ENCODE measurements at regions of chr4 and their contacts with region 1.

Region 1: GRCh38 chr4:73341454-73341853 is 62.6 kb upstream of the ALB start:
- DNase-seq: peak; percentile 72
- H3K4me3 Mint-ChIP-seq: no peak overlapping the region
- H3K27ac Mint-ChIP-seq: no peak overlapping the region
- H3K4me1 Mint-ChIP-seq: no peaks in the 10 kb centered on the region
- H3K27me3 Mint-ChIP-seq: no peaks in the 10 kb centered on the region
- CTCF ChIP-seq: peak; percentile 62

Region 2: GRCh38 chr4:73315091-73315490 is 26.4 kb before region 1 on chr4:
- CTCF ChIA-PET with region 1: interaction called, 30 read pairs
- POLR2A ChIA-PET with region 1: no interaction called
- intact Hi-C with region 1: no loop called
- DNase-seq: peak; percentile 3
- H3K4me3 Mint-ChIP-seq: no peak overlapping the region
- H3K27ac Mint-ChIP-seq: no peak overlapping the region
- H3K4me1 Mint-ChIP-seq: peaks cover 5% of the 10 kb centered on the region
- H3K27me3 Mint-ChIP-seq: no peaks in the 10 kb centered on the region
- CTCF ChIP-seq: no peak

Region 3: GRCh38 chr4:73434311-73434710 is 92.9 kb after region 1 on chr4:
- CTCF ChIA-PET with region 1: interaction called, 28 read pairs
- POLR2A ChIA-PET with region 1: interaction called, 4 read pairs
- intact Hi-C with region 1: loop called (anchors 5 kb)
- DNase-seq: peak; percentile 24
- H3K4me3 Mint-ChIP-seq: no peak overlapping the region
- H3K27ac Mint-ChIP-seq: no peak overlapping the region
- H3K4me1 Mint-ChIP-seq: no peaks in the 10 kb centered on the region
- H3K27me3 Mint-ChIP-seq: peaks cover 48% of the 10 kb centered on the region
- CTCF ChIP-seq: peak; percentile 40

Region 4: GRCh38 chr4:73573794-73574406 is 232.4 kb after region 1 on chr4:
- CTCF ChIA-PET with region 1: interaction called, 10 read pairs
- POLR2A ChIA-PET with region 1: no interaction called
- intact Hi-C with region 1: loop called (anchors 5 kb)
- DNase-seq: peak; percentile 83
- H3K4me3 Mint-ChIP-seq: no peak overlapping the region
- H3K27ac Mint-ChIP-seq: no peak overlapping the region
- H3K4me1 Mint-ChIP-seq: no peaks in the 10 kb centered on the region
- H3K27me3 Mint-ChIP-seq: no peaks in the 10 kb centered on the region
- CTCF ChIP-seq: peak; percentile 83

Measured in MCF 10A (cell line).